CD8-positive, alpha-beta T cell (primary cell): ENCODE measurements at regions of chr12 and their contacts with region 1.

Region 1: GRCh38 chr12:68610370-68611093 is at the start of gene RAP1B:
- DNase-seq: peak; percentile 80 to 96 (median 88)
- ATAC-seq: peak; percentile 81
- H3K4me3 ChIP-seq: peak within 1 kb of the TSS; percentile 95 to 97
- H3K4me3 Mint-ChIP-seq: peak within 1 kb of the TSS; percentile 93
- H3K27ac ChIP-seq: peak within 1 kb of the TSS; percentile 93 to 96
- H3K27ac Mint-ChIP-seq: peak within 1 kb of the TSS; percentile 99
- H3K4me1 ChIP-seq: peaks cover 26% of the 10 kb centered on the region
- H3K4me1 Mint-ChIP-seq: peaks cover 38% of the 10 kb centered on the region
- H3K27me3 ChIP-seq: no peaks in the 10 kb centered on the region
- H3K27me3 Mint-ChIP-seq: no peaks in the 10 kb centered on the region
- CTCF ChIP-seq: no peak
- total RNA-seq, gene RAP1B: 299 TPM

Region 2: GRCh38 chr12:67648521-67649260 is 961.8 kb before region 1 on chr12 and contains the start of gene DYRK2:
- CTCF ChIA-PET with region 1: no interaction called
- POLR2A ChIA-PET with region 1: no interaction called
- intact Hi-C with region 1: loop called in 1 of 2 experiments (anchors 5 kb)
- DNase-seq: peak; percentile 58 to 91 (median 78)
- ATAC-seq: peak; percentile 54
- H3K4me3 ChIP-seq: peak within 1 kb of the TSS; percentile 85 to 88
- H3K4me3 Mint-ChIP-seq: peak within 1 kb of the TSS; percentile 98
- H3K27ac ChIP-seq: peak within 1 kb of the TSS; percentile 79 to 82
- H3K27ac Mint-ChIP-seq: peak within 1 kb of the TSS; percentile 98
- H3K4me1 ChIP-seq: peaks cover 28% of the 10 kb centered on the region
- H3K4me1 Mint-ChIP-seq: peaks cover 42% of the 10 kb centered on the region
- H3K27me3 ChIP-seq: no peaks in the 10 kb centered on the region
- H3K27me3 Mint-ChIP-seq: no peaks in the 10 kb centered on the region
- CTCF ChIP-seq: no peak
- total RNA-seq, gene DYRK2: 118 to 122 TPM

Region 3: DNA sequence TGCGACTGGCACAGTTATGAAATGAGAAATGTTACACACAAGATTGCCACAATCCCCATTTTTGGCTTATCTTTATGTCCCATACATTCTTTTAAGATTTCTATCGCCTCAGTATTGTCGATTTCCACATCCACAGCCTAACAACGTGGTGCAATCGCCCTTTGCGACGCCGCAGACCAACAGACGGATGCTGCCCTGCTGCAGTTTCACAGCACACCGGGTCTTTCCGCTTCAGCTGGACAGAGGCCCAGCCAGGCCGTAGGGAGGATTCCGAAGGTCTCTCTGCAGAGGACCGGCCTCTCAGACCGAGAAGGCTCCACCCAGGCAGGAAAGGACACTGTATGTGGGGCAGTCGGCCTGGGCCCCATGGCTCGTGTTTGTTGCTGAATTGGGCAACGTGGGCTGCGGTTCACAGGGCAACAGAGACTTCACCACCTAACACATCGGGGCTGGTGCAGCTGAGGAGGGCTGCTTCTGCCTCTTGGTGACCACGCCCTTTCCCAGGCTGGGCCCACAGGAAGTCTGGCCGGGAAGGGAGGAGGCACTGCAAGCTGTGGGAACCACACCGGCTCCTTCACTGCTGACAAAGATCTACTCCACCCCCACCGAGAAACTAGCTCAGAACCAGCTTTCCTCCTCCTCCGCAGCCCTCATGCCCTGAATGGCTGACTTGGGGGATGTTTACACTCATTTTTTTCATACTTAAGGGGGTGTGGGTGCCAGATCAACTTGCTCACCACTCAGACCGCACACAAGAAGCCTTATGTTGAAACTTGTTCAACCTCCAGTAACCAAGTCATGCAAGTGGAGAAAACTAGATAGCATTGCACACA is 245.4 kb before region 1 on chr12:
- CTCF ChIA-PET with region 1: interaction called, 8 read pairs
- POLR2A ChIA-PET with region 1: interaction called, 19 read pairs
- intact Hi-C with region 1: loop called in 1 of 2 experiments (anchors 1 kb)
- DNase-seq: peak; percentile 67 to 97 (median 86)
- ATAC-seq: peak; percentile 91
- H3K4me3 ChIP-seq: peak overlapping the region; percentile 32 to 54
- H3K4me3 Mint-ChIP-seq: peak overlapping the region; percentile 81
- H3K27ac ChIP-seq: peak overlapping the region; percentile 74 to 85
- H3K27ac Mint-ChIP-seq: peak overlapping the region; percentile 95
- H3K4me1 ChIP-seq: peaks cover 52% of the 10 kb centered on the region
- H3K4me1 Mint-ChIP-seq: peaks cover 73% of the 10 kb centered on the region
- H3K27me3 ChIP-seq: no peaks in the 10 kb centered on the region
- H3K27me3 Mint-ChIP-seq: no peaks in the 10 kb centered on the region
- CTCF ChIP-seq: no peak

Region 4: GRCh38 chr12:68580911-68581310 is 29.6 kb before region 1 on chr12:
- CTCF ChIA-PET with region 1: interaction called, 5 read pairs
- POLR2A ChIA-PET with region 1: interaction called, 20 read pairs
- intact Hi-C with region 1: loop called in 1 of 2 experiments (anchors 5 kb)
- DNase-seq: no peak
- ATAC-seq: no peak
- H3K4me3 ChIP-seq: no peak overlapping the region
- H3K4me3 Mint-ChIP-seq: no peak overlapping the region
- H3K27ac ChIP-seq: no peak overlapping the region
- H3K27ac Mint-ChIP-seq: no peak overlapping the region
- H3K4me1 ChIP-seq: peaks cover 57% of the 10 kb centered on the region
- H3K4me1 Mint-ChIP-seq: peaks cover 55% of the 10 kb centered on the region
- H3K27me3 ChIP-seq: no peaks in the 10 kb centered on the region
- H3K27me3 Mint-ChIP-seq: no peaks in the 10 kb centered on the region
- CTCF ChIP-seq: no peak

Region 5: DNA sequence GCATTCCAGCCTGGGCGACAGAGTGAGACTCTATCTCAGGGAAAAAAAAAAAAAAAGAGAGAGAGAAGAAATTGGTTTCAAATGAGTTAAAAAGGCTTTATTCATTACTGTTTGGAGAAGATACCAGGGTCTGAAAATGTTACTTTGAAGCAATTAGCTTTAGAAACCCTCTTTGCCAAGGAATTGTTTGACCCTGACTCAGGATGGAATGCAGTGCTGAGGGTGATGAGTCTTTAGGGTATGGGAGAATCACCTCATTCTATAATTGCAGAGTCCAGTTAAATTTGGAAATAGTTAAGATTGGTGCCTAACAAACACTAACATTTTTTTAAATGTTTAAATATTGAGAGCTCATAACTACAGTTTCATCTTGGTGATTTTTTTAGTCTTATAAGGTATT is 13.5 kb after region 1 on chr12:
- CTCF ChIA-PET with region 1: no interaction called
- POLR2A ChIA-PET with region 1: interaction called, 13 read pairs
- intact Hi-C with region 1: no loop called
- DNase-seq: no peak
- ATAC-seq: no peak
- H3K4me3 ChIP-seq: no peak overlapping the region
- H3K4me3 Mint-ChIP-seq: peak overlapping the region; percentile 35
- H3K27ac ChIP-seq: peak overlapping the region in 1 of 2 experiments; percentile 22
- H3K27ac Mint-ChIP-seq: peak overlapping the region; percentile 50
- H3K4me1 ChIP-seq: peaks cover 82% of the 10 kb centered on the region
- H3K4me1 Mint-ChIP-seq: peaks cover 84% of the 10 kb centered on the region
- H3K27me3 ChIP-seq: no peaks in the 10 kb centered on the region
- H3K27me3 Mint-ChIP-seq: no peaks in the 10 kb centered on the region
- CTCF ChIP-seq: no peak

Region 6: GRCh38 chr12:68675101-68675842 is 64.7 kb after region 1 on chr12:
- CTCF ChIA-PET with region 1: no interaction called
- POLR2A ChIA-PET with region 1: interaction called, 10 read pairs
- intact Hi-C with region 1: loop called in 1 of 2 experiments (anchors 2 kb)
- DNase-seq: peak; percentile 53 to 93 (median 84)
- ATAC-seq: peak; percentile 99
- H3K4me3 ChIP-seq: peak overlapping the region; percentile 4 to 47
- H3K4me3 Mint-ChIP-seq: peak overlapping the region; percentile 56
- H3K27ac ChIP-seq: peak overlapping the region; percentile 40 to 68
- H3K27ac Mint-ChIP-seq: peak overlapping the region; percentile 86
- H3K4me1 ChIP-seq: peaks cover 47% of the 10 kb centered on the region
- H3K4me1 Mint-ChIP-seq: peaks cover 60% of the 10 kb centered on the region
- H3K27me3 ChIP-seq: no peaks in the 10 kb centered on the region
- H3K27me3 Mint-ChIP-seq: no peaks in the 10 kb centered on the region
- CTCF ChIP-seq: no peak

Region 7: DNA sequence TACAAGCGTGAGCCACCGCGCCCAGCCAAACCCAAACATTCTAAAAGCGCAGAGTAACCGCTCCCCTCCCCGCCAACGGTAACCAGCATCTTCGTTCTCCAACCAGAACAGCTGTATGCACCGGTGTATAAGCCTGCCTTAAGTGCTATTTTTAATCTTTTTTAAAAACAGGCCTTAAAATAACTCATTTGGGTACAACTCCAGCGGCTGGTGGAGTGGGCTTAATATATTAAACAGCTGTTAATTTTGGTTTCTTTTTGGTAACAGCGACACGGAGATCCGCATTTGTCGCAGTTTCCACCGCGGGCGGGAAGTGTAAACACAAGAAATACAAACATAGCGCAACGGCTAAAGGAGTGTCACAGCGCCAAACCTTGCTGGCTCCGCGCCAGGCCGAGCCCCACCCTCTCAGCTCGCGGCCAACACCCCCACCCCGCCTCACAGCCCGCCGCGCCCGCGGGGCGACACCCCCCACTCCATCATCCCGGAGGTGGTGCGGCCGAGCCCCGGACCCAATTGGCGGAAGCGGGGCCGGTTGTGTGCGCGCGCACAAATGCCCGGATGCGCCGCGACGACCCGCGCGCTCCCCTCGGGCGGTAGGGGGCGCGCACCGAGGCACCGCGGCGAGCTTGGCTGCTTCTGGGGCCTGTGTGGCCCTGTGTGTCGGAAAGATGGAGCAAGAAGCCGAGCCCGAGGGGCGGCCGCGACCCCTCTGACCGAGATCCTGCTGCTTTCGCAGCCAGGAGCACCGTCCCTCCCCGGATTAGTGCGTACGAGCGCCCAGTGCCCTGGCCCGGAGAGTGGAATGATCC is 197.2 kb after region 1 on chr12 and contains the start of gene MDM2:
- CTCF ChIA-PET with region 1: no interaction called
- POLR2A ChIA-PET with region 1: interaction called, 4 read pairs
- intact Hi-C with region 1: loop called (anchors 1 to 5 kb)
- DNase-seq: peak; percentile 94 to 99 (median 97)
- ATAC-seq: peak; percentile 91
- H3K4me3 ChIP-seq: peak within 1 kb of the TSS; percentile 97
- H3K4me3 Mint-ChIP-seq: peak within 1 kb of the TSS; percentile 95
- H3K27ac ChIP-seq: peak within 1 kb of the TSS; percentile 86 to 95
- H3K27ac Mint-ChIP-seq: peak within 1 kb of the TSS; percentile 97
- H3K4me1 ChIP-seq: peaks cover 24% of the 10 kb centered on the region
- H3K4me1 Mint-ChIP-seq: peaks cover 30% of the 10 kb centered on the region
- H3K27me3 ChIP-seq: no peaks in the 10 kb centered on the region
- H3K27me3 Mint-ChIP-seq: no peaks in the 10 kb centered on the region
- CTCF ChIP-seq: peak; percentile 66
- total RNA-seq, gene MDM2: 95.1 to 98.0 TPM